CD4-positive, alpha-beta T cell (primary cell): ENCODE measurements at regions of chr7 and their contacts with region 1.

Region 1: GRCh38 chr7:148962823-148963582 is 65.3 kb downstream of the PDIA4 start:
- DNase-seq: peak; percentile 42 to 85 (median 57)
- ATAC-seq: peak; percentile 66
- H3K4me3 ChIP-seq: peak overlapping the region; percentile 72
- H3K4me3 Mint-ChIP-seq: peak overlapping the region; percentile 94
- H3K27ac ChIP-seq: peak overlapping the region in 1 of 2 donors; percentile 80
- H3K27ac Mint-ChIP-seq: peak overlapping the region; percentile 89
- H3K4me1 ChIP-seq: peaks cover 28% of the 10 kb centered on the region
- H3K4me1 Mint-ChIP-seq: peaks cover 25% of the 10 kb centered on the region
- H3K27me3 ChIP-seq: no peaks in the 10 kb centered on the region
- H3K27me3 Mint-ChIP-seq: no peaks in the 10 kb centered on the region
- CTCF ChIP-seq: peak; percentile 95

Region 2: DNA sequence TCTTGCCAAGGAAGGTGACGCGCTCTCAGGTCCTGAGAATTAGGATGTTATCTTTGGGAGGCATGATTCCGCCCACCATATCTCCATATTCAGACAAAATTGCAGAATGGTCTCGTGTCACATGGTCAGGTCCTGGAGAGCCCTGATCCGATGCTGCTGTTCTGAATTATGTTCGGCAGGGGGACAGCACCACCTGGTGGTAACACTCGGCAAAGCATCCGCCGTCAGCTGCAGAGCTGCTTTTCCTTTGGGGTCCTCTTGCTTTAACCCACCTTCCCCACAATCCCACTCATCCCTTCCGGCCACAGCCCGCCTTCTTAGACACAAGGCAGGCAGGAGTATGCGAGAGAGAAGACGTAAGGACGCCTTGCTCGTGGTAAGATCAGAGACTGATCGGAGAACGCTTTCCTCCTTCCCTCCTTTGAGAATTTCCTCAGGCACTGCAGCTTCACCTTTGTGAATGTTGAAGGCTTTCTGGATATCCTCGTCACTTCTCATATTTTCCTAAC is 700.2 kb before region 1 on chr7:
- CTCF ChIA-PET with region 1: no interaction called
- POLR2A ChIA-PET with region 1: no interaction called
- intact Hi-C with region 1: loop called (anchors 5 to 10 kb)
- DNase-seq: peak; percentile 20 to 72 (median 53)
- ATAC-seq: peak; percentile 55
- H3K4me3 ChIP-seq: no peak overlapping the region
- H3K4me3 Mint-ChIP-seq: no peak overlapping the region
- H3K27ac ChIP-seq: no peak overlapping the region
- H3K27ac Mint-ChIP-seq: no peak overlapping the region
- H3K4me1 ChIP-seq: peaks cover 8% of the 10 kb centered on the region
- H3K4me1 Mint-ChIP-seq: peaks cover 7% of the 10 kb centered on the region
- H3K27me3 ChIP-seq: peaks cover 0 to 2% of the 10 kb centered on the region in 2 experiments
- H3K27me3 Mint-ChIP-seq: peaks cover 25% of the 10 kb centered on the region
- CTCF ChIP-seq: peak; percentile 87

Region 3: GRCh38 chr7:148575640-148576411 is 387.2 kb before region 1 on chr7:
- CTCF ChIA-PET with region 1: interaction called, 25 read pairs
- POLR2A ChIA-PET with region 1: interaction called, 3 read pairs
- intact Hi-C with region 1: loop called (anchors 1 kb)
- DNase-seq: peak; percentile 50 to 79 (median 64)
- ATAC-seq: peak; percentile 81
- H3K4me3 ChIP-seq: no peak overlapping the region
- H3K4me3 Mint-ChIP-seq: no peak overlapping the region
- H3K27ac ChIP-seq: no peak overlapping the region
- H3K27ac Mint-ChIP-seq: no peak overlapping the region
- H3K4me1 ChIP-seq: peaks cover 5% of the 10 kb centered on the region
- H3K4me1 Mint-ChIP-seq: peaks cover 4% of the 10 kb centered on the region
- H3K27me3 ChIP-seq: no peaks in the 10 kb centered on the region
- H3K27me3 Mint-ChIP-seq: no peaks in the 10 kb centered on the region
- CTCF ChIP-seq: peak; percentile 82

Region 4: DNA sequence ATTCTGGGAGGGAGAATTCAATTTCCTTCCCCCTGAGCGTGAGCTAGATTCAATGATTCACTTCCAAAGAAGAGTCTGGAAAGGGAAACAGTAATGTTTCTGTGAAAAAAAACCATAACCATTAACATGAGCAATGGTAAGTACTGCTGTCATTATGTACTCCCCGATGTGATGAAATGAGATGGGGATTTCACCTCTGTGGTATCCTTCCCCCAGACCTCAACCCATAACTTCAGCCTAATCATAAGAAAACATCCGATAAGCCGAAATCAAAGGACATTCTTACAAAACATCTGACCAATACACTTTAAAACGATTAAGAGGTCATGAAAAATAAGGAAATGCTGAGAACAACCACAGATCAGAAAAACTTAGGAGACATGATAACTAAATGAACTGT is 106.1 kb before region 1 on chr7:
- CTCF ChIA-PET with region 1: interaction called, 21 read pairs
- POLR2A ChIA-PET with region 1: interaction called, 12 read pairs
- intact Hi-C with region 1: loop called (anchors 1 kb)
- DNase-seq: peak in 2 of 14 experiments; percentile 58 to 68
- ATAC-seq: no peak
- H3K4me3 ChIP-seq: no peak overlapping the region
- H3K4me3 Mint-ChIP-seq: no peak overlapping the region
- H3K27ac ChIP-seq: no peak overlapping the region
- H3K27ac Mint-ChIP-seq: no peak overlapping the region
- H3K4me1 ChIP-seq: peaks cover 6% of the 10 kb centered on the region
- H3K4me1 Mint-ChIP-seq: peaks cover 17% of the 10 kb centered on the region
- H3K27me3 ChIP-seq: no peaks in the 10 kb centered on the region
- H3K27me3 Mint-ChIP-seq: no peaks in the 10 kb centered on the region
- CTCF ChIP-seq: no peak

Region 5: DNA sequence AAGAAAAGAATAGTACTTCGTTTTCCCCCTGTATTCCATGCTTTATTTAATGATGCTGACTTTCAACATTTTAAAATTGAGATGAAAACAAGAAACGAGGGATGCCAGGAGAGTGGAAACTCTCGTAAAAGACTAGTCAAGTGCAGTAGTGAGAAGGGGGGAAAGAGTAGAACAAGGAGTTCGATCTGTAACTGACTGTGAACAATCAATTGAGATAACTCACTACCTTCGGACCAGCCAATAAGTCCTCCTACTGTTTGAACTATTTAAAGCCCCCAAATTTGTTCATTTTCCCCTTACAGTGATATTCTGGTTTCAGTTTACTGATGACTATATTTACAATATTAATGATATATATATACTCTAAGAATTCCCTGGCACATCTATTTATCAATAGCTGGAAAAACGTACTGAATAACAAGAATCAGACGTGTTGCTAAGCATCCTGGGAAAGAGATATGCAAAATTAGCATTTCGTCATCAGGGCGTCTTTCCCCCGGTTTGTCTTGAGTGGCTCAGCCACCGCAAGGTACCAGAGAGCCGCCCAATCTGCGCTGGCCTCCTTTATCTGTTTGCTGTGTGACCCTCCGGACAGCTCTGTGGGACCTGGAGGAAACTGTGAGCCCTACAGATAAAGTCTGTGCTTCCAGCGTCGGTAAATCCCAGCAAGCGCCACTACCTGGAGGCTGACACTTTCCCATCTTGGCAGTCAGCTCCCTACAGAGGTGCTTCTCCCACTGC is 24.2 kb after region 1 on chr7:
- CTCF ChIA-PET with region 1: interaction called, 11 read pairs
- POLR2A ChIA-PET with region 1: interaction called, 4 read pairs
- intact Hi-C with region 1: loop called in 1 of 2 experiments (anchors 2 kb)
- DNase-seq: peak; percentile 58 to 94 (median 70)
- ATAC-seq: peak; percentile 71
- H3K4me3 ChIP-seq: peak overlapping the region; percentile 95
- H3K4me3 Mint-ChIP-seq: peak overlapping the region; percentile 96
- H3K27ac ChIP-seq: peak overlapping the region; percentile 73 to 94
- H3K27ac Mint-ChIP-seq: peak overlapping the region; percentile 95
- H3K4me1 ChIP-seq: peaks cover 41% of the 10 kb centered on the region
- H3K4me1 Mint-ChIP-seq: peaks cover 55% of the 10 kb centered on the region
- H3K27me3 ChIP-seq: no peaks in the 10 kb centered on the region
- H3K27me3 Mint-ChIP-seq: peaks cover 5% of the 10 kb centered on the region
- CTCF ChIP-seq: no peak